Activated naive CD4-positive, alpha-beta T cell treated with anti-CD3 and anti-CD28 coated beads for 36 hours (primary cell): ENCODE measurements at regions of chr7 and their contacts with region 1.

Region 1: DNA sequence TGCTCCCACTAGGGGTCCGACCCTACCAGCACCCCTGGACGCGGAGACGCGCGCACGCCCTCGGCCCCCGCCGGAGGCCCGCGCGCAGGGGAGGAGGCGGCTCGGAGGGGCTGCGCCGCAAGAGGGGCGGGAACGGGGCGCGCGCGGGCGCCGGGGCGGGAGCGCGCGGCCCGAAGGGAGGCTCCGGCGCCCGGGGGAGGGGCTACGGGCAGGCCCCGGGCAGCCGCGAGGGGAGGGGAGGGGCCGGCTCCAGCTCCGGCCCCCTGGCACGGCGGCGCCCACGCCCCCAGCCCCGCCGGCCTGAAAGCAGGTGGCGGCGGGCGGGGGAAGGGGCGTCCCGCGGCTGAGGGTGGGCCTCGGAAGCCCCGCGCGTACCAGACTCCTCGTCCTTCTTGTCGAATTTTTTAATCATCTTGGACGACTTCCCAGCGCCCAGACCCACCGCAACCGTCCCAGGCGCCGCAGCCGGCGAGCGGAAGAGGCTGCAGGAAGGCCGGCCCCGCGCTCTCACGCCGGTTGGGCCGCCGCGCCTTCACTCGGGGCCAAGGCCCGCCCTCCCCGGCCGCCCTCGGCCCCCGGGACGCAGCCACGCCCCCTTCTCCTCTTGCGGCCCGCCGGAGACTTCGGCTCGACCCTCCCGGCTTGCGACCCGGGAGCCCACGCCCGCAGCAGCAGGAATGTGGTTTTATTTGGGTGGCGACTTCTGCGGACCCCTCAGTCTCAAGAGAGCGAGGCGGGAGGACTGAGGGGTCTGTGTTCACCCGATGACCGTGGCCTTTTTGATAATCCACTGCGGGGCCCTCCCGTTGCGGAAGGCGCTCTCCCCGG is at the start of gene COPG2:
- DNase-seq: peak; percentile 74
- H3K4me3 Mint-ChIP-seq: peak within 1 kb of the TSS; percentile 82
- H3K27ac Mint-ChIP-seq: peak within 1 kb of the TSS; percentile 24
- H3K4me1 Mint-ChIP-seq: peaks cover 14% of the 10 kb centered on the region
- H3K27me3 Mint-ChIP-seq: peaks cover 7% of the 10 kb centered on the region
- total RNA-seq, gene COPG2: 32.7 to 35.7 TPM

Region 2: GRCh38 chr7:130430841-130431666 is 237.4 kb before region 1 on chr7:
- CTCF ChIA-PET with region 1: no interaction called
- intact Hi-C with region 1: no loop called
- DNase-seq: no peak
- H3K4me3 Mint-ChIP-seq: no peak overlapping the region
- H3K27ac Mint-ChIP-seq: no peak overlapping the region
- H3K4me1 Mint-ChIP-seq: peaks cover 26% of the 10 kb centered on the region
- H3K27me3 Mint-ChIP-seq: no peaks in the 10 kb centered on the region

Region 3: DNA sequence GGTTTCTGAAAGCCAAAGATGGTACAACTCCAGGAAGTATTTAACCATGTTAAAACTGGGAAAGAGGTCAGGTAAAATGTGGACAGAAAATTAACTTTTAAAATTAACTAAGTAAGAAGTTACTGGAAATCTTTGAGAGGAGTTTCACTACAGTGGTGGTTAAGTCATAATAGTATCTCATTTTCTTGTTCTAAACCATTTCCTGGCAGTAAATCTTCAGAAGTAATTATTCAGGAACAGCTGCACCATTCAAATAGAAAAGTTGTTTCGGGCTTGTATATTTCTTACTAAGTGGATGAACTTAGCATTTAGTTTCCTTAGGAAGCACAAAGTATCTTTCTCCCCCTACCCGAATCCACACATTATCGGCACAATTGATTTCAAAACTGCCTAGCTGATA is 27.0 kb before region 1 on chr7:
- CTCF ChIA-PET with region 1: interaction called, 4 read pairs
- intact Hi-C with region 1: loop called (anchors 1 kb)
- DNase-seq: no peak
- H3K4me3 Mint-ChIP-seq: no peak overlapping the region
- H3K27ac Mint-ChIP-seq: peak overlapping the region; percentile 65
- H3K4me1 Mint-ChIP-seq: peaks cover 18% of the 10 kb centered on the region
- H3K27me3 Mint-ChIP-seq: no peaks in the 10 kb centered on the region

Region 4: GRCh38 chr7:130649004-130649790 is 19.3 kb before region 1 on chr7:
- CTCF ChIA-PET with region 1: no interaction called
- intact Hi-C with region 1: loop called (anchors 2 kb)
- DNase-seq: peak; percentile 53
- H3K4me3 Mint-ChIP-seq: no peak overlapping the region
- H3K27ac Mint-ChIP-seq: peak overlapping the region; percentile 79
- H3K4me1 Mint-ChIP-seq: peaks cover 29% of the 10 kb centered on the region
- H3K27me3 Mint-ChIP-seq: no peaks in the 10 kb centered on the region